ENCODE measurements at regions of chr2 and their contacts with region 1.

Region 1: DNA sequence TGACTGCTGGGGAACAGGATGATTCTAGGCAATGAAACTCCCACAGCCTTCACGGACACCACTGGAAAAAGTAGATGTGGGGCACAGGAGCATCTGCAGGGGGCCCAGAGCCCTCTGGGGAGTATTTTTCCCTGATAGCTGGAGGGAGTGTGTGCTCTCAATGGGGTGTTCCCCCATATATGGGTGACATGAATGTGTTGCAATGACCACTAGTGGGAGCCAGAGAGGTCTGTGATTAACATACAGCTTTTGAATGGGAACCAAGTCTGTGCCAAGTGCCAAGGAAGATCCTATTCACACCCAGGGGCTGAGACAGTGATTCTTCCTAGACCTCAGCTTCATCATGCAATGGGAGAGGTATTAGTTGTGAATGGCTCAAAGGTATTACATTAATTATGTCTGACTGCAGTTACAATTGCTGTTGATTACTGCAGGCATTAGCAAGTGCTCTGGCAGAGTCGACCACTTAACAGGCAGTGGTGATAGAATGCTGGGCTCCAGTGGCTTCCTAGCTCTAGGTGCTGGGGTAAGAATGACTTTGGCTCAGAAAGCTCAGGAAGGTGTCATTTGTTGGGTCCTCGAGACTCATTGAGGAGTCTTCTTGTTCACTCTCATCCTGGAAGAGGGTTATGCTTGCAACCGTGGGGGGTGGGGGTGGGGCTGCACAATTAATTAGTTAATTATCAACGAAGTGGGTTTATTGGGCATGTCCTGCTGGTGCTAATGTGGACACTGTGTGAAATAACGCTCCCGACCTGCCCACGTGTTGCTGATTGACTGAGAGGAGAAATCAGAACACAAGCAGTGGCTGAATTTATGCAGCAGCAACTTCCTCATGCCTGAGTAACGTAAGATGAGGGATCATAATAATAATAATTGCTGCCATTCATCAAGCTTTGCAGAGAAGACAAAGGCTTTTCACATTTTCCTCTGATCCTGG is 194.1 kb downstream of the CLIP4 start:
- DNase-seq: peak; percentile 75
- H3K4me3 ChIP-seq: no peak overlapping the region
- H3K27ac ChIP-seq: no peak overlapping the region
- H3K4me1 ChIP-seq: no peaks in the 10 kb centered on the region
- H3K27me3 ChIP-seq: no peaks in the 10 kb centered on the region

Region 2: GRCh38 chr2:29579495-29580169 is 270.3 kb after region 1 on chr2:
- in situ Hi-C with region 1: no loop called
- DNase-seq: no peak
- H3K4me3 ChIP-seq: no peak overlapping the region
- H3K27ac ChIP-seq: no peak overlapping the region
- H3K4me1 ChIP-seq: no peaks in the 10 kb centered on the region
- H3K27me3 ChIP-seq: peaks cover 13% of the 10 kb centered on the region

Region 3: DNA sequence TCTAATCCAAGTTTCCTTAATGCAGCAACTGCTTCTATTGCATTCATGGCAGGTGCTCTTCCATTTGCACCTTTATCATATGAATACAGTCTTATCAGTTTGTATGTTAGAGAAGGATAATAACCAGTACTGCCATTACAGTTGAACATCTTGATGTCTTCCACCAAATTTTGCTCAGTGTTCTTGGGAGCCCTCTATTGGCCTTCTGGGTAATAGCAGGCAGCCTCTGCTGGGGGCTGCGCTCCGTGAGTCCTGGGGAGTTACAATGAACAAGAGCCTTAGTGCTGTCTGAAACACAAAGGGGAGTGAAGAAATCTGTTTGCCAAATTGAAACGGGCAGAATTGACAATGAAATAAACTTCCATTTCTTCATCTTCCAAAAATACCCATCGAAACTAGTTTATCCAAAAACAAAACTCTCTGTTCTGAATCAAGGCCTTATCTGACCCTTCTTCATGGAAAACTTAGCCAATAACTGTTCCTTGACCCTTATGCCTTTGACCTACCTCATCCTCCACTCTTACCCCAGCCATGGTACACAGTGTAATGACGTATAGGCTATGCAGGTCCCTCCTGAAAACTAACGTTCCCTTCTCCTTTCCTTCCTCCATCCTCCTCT is 532.1 kb after region 1 on chr2:
- in situ Hi-C with region 1: loop called (anchors 25 kb)
- DNase-seq: peak; percentile 57
- H3K4me3 ChIP-seq: no peak overlapping the region
- H3K27ac ChIP-seq: no peak overlapping the region
- H3K4me1 ChIP-seq: peaks cover 9% of the 10 kb centered on the region
- H3K27me3 ChIP-seq: 0 out of 2 replicates have a peak, but pooled peaks cover 16% of the 10 kb centered on the region